Activated naive CD4-positive, alpha-beta T cell treated with anti-CD3 and anti-CD28 coated beads for 36 hours (primary cell): ENCODE measurements at regions of chr17 and their contacts with region 1.

Region 1: GRCh38 chr17:81512560-81513371 is at the start of gene ACTG1:
- DNase-seq: peak; percentile 90
- H3K4me3 Mint-ChIP-seq: peak within 1 kb of the TSS; percentile 96
- H3K27ac Mint-ChIP-seq: peak within 1 kb of the TSS; percentile 93
- H3K4me1 Mint-ChIP-seq: peaks cover 32% of the 10 kb centered on the region
- H3K27me3 Mint-ChIP-seq: no peaks in the 10 kb centered on the region
- total RNA-seq, gene ACTG1: 2,881 to 2,925 TPM

Region 2: DNA sequence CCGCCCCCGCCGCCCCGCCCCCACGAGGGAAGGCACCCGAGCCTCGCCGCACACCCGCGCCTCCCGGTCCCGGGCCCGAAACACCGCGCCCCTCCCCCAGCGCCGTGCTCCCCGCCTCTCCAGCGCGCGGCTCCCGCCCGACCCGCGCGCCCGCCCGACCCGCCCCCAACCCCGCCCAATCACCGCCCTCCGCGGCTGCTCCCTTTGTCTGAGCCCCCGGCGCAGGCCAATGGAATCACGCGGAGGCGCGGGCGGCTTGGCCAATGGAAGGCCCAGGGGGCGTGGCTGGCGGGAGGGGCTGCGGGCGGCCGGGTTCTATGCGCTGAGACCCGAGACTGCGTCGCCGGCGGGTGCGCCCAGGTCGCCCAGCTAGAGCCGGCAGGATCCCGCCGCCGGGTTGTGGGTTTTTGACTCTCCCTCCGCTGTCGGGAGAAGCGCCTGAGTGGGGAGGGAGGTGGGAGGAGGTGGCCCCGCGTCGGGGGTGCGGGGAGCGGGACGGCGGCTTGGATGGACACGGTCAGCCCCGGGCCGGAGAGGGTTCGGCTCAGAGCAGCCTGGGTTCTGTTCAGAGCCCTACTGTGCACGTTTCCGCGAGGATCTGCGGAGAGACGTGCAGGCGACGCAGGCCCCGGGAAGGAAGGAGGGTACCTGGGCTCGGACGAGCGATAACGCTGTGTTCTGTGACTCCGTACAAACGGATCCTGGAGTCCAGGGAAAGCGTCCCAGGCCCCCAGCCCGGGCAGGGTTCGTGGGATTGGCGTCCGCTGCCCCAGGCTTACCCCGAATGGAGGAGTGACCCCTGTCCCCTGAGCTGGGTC is 166.5 kb before region 1 on chr17:
- CTCF ChIA-PET with region 1: no interaction called
- intact Hi-C with region 1: loop called (anchors 2 kb)
- DNase-seq: peak; percentile 96
- H3K4me3 Mint-ChIP-seq: peak overlapping the region; percentile 43
- H3K27ac Mint-ChIP-seq: no peak overlapping the region
- H3K4me1 Mint-ChIP-seq: peaks cover 23% of the 10 kb centered on the region
- H3K27me3 Mint-ChIP-seq: peaks cover 37% of the 10 kb centered on the region

Region 3: GRCh38 chr17:81484195-81484979 is 28.4 kb before region 1 on chr17:
- CTCF ChIA-PET with region 1: interaction called, 6 read pairs
- intact Hi-C with region 1: loop called (anchors 2 kb)
- DNase-seq: peak; percentile 88
- H3K4me3 Mint-ChIP-seq: peak overlapping the region; percentile 18
- H3K27ac Mint-ChIP-seq: no peak overlapping the region
- H3K4me1 Mint-ChIP-seq: peaks cover 20% of the 10 kb centered on the region
- H3K27me3 Mint-ChIP-seq: peaks cover 21% of the 10 kb centered on the region

Region 4: GRCh38 chr17:81666342-81667191 is 153.8 kb after region 1 on chr17 and contains the starts of genes CCDC137 and OXLD1:
- CTCF ChIA-PET with region 1: no interaction called
- intact Hi-C with region 1: loop called (anchors 5 kb)
- DNase-seq: peak; percentile 97
- H3K4me3 Mint-ChIP-seq: peak within 1 kb of the TSS; percentile 99
- H3K27ac Mint-ChIP-seq: peak within 1 kb of the TSS; percentile 96
- H3K4me1 Mint-ChIP-seq: peaks cover 52% of the 10 kb centered on the region
- H3K27me3 Mint-ChIP-seq: no peaks in the 10 kb centered on the region
- total RNA-seq, gene CCDC137: 30.8 to 32.3 TPM
- total RNA-seq, gene OXLD1: 41.9 to 44.1 TPM

Region 5: DNA sequence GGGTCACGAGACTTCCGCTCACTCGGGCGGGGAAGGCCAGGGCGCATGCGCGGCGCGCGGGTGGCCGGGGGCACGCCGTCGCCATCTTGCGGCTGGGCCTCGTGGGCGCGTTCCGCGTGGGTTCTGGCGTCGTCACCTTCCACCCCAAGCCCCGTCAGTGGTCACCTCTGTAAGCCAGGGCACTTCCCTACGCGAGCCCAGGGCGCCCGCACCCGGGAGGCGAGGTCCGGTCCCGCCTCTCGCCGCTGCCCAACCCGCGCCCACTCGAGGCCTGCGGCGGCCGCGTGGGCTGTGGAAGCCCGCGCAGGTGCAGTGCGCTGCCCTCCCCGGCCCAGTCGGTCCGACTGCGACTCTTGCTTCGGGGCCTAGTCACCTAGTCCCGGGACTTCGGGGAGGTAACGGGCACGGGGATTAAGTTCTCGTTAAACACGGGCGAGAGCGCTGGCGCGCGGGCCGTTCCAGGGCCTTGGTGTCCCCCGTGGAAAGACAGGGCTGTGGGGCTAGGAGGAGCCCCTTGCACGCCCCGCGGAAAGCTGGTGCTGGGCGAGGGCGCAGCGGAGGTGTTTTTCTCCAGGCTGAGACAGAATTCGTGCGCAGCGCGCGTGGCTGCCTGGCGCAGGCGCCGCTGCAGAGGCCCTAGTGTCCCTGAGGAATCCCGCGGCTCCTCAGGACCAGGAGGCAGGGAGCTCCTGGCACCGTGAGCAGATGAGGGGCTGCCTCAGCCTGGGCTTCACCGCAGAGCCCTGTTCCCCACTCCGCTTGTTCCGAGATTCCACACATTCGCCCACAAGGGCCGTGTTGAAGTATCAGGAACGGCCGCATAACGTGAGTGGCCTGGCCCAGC is 358.8 kb after region 1 on chr17:
- CTCF ChIA-PET with region 1: no interaction called
- intact Hi-C with region 1: loop called (anchors 5 kb)
- DNase-seq: peak; percentile 96
- H3K4me3 Mint-ChIP-seq: peak overlapping the region; percentile 83
- H3K27ac Mint-ChIP-seq: peak overlapping the region; percentile 94
- H3K4me1 Mint-ChIP-seq: peaks cover 48% of the 10 kb centered on the region
- H3K27me3 Mint-ChIP-seq: no peaks in the 10 kb centered on the region